ENCODE measurements at regions of chr4 and their contacts with region 1.

Region 1: GRCh38 chr4:2954358-2955185 is 8.6 kb downstream of the NOP14 start:
- DNase-seq: peak; percentile 92
- H3K4me3 Mint-ChIP-seq: peak overlapping the region; percentile 61
- H3K27ac Mint-ChIP-seq: peak overlapping the region; percentile 99
- H3K4me1 Mint-ChIP-seq: peaks cover 75% of the 10 kb centered on the region
- H3K27me3 Mint-ChIP-seq: no peaks in the 10 kb centered on the region

Region 2: GRCh38 chr4:2761035-2761923 is 193.3 kb before region 1 on chr4:
- CTCF ChIA-PET with region 1: interaction called, 17 read pairs
- POLR2A ChIA-PET with region 1: no interaction called
- intact Hi-C with region 1: loop called (anchors 2 kb)
- DNase-seq: peak; percentile 51
- H3K4me3 Mint-ChIP-seq: no peak overlapping the region
- H3K27ac Mint-ChIP-seq: no peak overlapping the region
- H3K4me1 Mint-ChIP-seq: peaks cover 9% of the 10 kb centered on the region
- H3K27me3 Mint-ChIP-seq: no peaks in the 10 kb centered on the region

Region 3: GRCh38 chr4:2943321-2944090 is 11.1 kb before region 1 on chr4:
- CTCF ChIA-PET with region 1: interaction called, 103 read pairs
- POLR2A ChIA-PET with region 1: interaction called, 144 read pairs
- intact Hi-C with region 1: no loop called
- DNase-seq: peak; percentile 8
- H3K4me3 Mint-ChIP-seq: no peak overlapping the region
- H3K27ac Mint-ChIP-seq: peak overlapping the region; percentile 83
- H3K4me1 Mint-ChIP-seq: peaks cover 47% of the 10 kb centered on the region
- H3K27me3 Mint-ChIP-seq: no peaks in the 10 kb centered on the region

Region 4: DNA sequence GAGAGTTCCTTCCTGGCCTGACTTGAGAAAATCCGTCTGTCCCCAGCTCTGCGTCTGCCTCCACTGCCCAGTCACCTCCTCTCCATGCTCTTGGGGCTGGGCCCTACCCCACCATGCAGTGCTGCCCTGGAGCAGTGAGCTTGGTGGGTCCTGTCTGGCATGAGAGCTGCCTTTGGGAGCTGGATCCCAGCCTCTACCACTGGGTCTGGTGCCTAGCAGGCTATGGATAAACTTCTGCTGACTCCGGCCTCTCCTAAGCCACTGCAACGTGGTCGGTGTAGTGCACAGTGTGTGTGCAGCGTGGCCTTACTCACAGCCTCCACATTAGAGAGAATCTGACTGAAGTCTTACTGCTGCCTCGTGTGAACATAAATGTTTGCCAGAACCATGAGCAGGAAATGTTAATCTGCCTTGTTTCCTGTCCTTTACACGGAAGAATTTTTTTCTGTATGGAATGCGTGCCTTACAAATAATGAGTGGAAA is 167.6 kb after region 1 on chr4:
- CTCF ChIA-PET with region 1: no interaction called
- POLR2A ChIA-PET with region 1: no interaction called
- intact Hi-C with region 1: no loop called
- DNase-seq: no peak
- H3K4me3 Mint-ChIP-seq: no peak overlapping the region
- H3K27ac Mint-ChIP-seq: peak overlapping the region; percentile 60
- H3K4me1 Mint-ChIP-seq: peaks cover 16% of the 10 kb centered on the region
- H3K27me3 Mint-ChIP-seq: no peaks in the 10 kb centered on the region

Measured in activated CD4-positive, alpha-beta memory T cell treated with anti-CD3 and anti-CD28 coated beads for 36 hours (primary cell).